ENCODE measurements at regions of chr7 and their contacts with region 1.

Region 1: DNA sequence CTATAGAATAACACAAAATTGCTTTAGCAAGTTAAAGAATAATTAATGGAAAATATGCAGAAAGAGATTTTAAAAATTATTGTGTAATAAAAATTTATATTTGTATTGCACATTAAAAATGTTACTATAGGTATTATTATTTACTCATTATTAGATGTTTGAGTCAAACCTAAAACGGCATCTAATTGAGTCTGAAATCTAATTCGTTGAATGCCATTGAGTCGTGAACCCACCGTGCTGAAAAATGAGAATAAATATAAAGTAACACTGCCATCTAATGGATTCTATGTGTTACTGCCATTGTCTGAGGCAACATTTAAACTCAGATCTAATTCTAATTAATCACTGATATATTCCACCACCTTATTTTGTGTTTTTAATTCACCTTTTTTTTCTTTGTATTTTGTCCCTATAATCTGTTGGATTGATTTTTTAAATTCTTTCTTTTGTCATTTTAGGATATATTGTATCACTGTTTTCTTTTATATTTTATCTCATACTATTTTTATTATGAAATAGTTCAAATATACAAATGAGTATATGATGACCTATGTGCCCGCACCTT is 62.2 kb downstream of the SAMD9 start:
- DNase-seq: peak in 1 of 2 donors; percentile 65
- ATAC-seq: peak; percentile 75 to 79 (median 76)
- H3K4me3 ChIP-seq: no peak overlapping the region
- H3K4me3 Mint-ChIP-seq: no peak overlapping the region
- H3K27ac ChIP-seq: no peak overlapping the region
- H3K27ac Mint-ChIP-seq: no peak overlapping the region
- H3K4me1 ChIP-seq: no peaks in the 10 kb centered on the region
- H3K4me1 Mint-ChIP-seq: no peaks in the 10 kb centered on the region
- H3K27me3 ChIP-seq: no peaks in the 10 kb centered on the region
- H3K27me3 Mint-ChIP-seq: peaks cover 2 to 7% of the 10 kb centered on the region in 2 donors
- CTCF ChIP-seq: peak; percentile 93

Region 2: DNA sequence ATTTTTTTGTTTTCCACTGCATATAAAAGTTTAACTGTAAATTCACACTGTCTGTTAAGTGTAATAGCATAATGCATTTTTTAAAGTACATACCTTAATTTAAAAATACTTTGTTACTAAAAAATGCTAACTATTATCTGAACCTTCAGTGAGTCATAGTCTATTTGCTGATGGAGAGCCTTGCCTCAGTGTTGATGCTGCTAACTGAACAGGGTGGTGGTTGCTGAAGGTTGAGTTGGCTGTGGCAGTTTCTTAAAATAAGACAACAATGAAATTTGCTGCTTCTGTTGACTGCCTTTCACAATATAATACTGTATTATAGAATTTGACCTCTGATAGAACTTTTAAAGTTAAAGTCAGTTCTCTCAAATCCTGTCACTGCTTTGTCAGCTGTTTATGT is 680.6 kb before region 1 on chr7:
- intact Hi-C with region 1: no loop called
- DNase-seq: no peak
- ATAC-seq: no peak
- H3K4me3 ChIP-seq: no peak overlapping the region
- H3K4me3 Mint-ChIP-seq: no peak overlapping the region
- H3K27ac ChIP-seq: no peak overlapping the region
- H3K27ac Mint-ChIP-seq: no peak overlapping the region
- H3K4me1 ChIP-seq: no peaks in the 10 kb centered on the region
- H3K4me1 Mint-ChIP-seq: no peaks in the 10 kb centered on the region
- H3K27me3 ChIP-seq: no peaks in the 10 kb centered on the region
- H3K27me3 Mint-ChIP-seq: no peaks in the 10 kb centered on the region
- CTCF ChIP-seq: no peak

Region 3: GRCh38 chr7:92423710-92424131 is 631.9 kb before region 1 on chr7:
- intact Hi-C with region 1: loop called (anchors 1 kb)
- DNase-seq: no peak
- ATAC-seq: no peak
- H3K4me3 ChIP-seq: no peak overlapping the region
- H3K4me3 Mint-ChIP-seq: no peak overlapping the region
- H3K27ac ChIP-seq: no peak overlapping the region
- H3K27ac Mint-ChIP-seq: peak overlapping the region in 1 of 2 donors; percentile 0
- H3K4me1 ChIP-seq: peaks cover 5% of the 10 kb centered on the region
- H3K4me1 Mint-ChIP-seq: peaks cover 6 to 9% of the 10 kb centered on the region in 2 donors
- H3K27me3 ChIP-seq: no peaks in the 10 kb centered on the region
- H3K27me3 Mint-ChIP-seq: peaks cover 9 to 17% of the 10 kb centered on the region in 2 donors
- CTCF ChIP-seq: no peak

Region 4: DNA sequence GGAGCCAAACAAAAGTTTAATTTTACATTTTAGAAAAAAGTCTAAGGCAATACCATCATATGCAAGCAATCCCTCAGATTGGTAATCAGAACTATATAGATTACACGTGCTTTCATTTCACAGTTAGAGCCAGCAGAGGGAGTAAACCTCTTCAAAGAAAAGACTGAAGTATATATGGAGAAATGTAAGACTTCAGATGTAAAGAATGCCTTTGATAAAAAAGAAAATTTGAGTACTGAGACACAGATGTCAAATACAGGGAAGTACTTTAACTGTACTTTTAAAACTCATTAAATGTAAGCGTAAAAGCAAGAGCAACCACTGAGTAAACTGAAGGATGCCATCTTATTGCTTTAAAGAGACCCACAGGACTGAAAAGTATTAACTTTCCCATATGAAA is 364.0 kb before region 1 on chr7:
- intact Hi-C with region 1: loop called (anchors 2 kb)
- DNase-seq: peak in 1 of 2 donors; percentile 68
- ATAC-seq: peak; percentile 63 to 88 (median 86)
- H3K4me3 ChIP-seq: no peak overlapping the region
- H3K4me3 Mint-ChIP-seq: peak overlapping the region; percentile 45
- H3K27ac ChIP-seq: no peak overlapping the region
- H3K27ac Mint-ChIP-seq: peak overlapping the region; percentile 44 to 73
- H3K4me1 ChIP-seq: peaks cover 3% of the 10 kb centered on the region
- H3K4me1 Mint-ChIP-seq: peaks cover 56 to 61% of the 10 kb centered on the region in 2 donors
- H3K27me3 ChIP-seq: no peaks in the 10 kb centered on the region
- H3K27me3 Mint-ChIP-seq: no peaks in the 10 kb centered on the region
- CTCF ChIP-seq: peak; percentile 61